PC-3 (cell line): ENCODE measurements at regions of chr5 and their contacts with region 1.

Region 1: DNA sequence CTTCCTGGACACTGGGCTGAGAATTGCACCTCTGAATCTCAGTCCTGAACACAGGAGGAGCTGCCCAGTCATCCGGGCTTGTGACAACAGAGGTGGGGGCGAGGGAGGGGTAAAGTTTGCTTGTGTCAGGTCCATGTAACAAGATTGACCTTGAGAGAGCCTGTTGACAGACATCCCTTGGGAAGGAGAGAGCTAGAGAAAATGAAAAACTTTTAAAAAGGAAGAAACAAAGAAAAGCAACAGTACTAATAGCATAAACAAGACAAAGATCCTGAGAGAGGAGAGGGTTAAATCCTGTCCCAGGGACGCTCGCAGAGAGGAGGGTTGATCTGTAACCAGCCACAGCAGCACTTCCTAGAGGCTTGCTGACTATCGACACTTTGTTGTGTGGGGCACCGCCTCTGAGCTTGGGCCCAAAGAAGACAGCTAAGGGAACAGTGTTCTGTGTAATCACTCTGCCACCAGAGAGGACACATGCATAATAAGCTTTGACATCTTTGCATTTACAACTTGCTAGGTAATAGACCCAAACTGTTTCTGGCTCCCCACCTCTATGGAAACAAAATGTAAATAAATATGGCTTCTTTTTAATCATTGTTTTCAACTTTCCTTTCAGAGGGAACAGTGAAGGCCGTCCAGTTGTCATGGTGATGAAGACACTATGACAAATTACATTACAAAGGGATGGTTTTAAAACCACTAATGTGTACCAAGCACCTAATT is 363.7 kb downstream of the CSNK1G3 start:
- DNase-seq: no peak
- ATAC-seq: no peak
- H3K4me3 ChIP-seq: no peak overlapping the region
- H3K27ac ChIP-seq: no peak overlapping the region
- H3K4me1 ChIP-seq: no peaks in the 10 kb centered on the region
- H3K27me3 ChIP-seq: no peaks in the 10 kb centered on the region
- CTCF ChIP-seq: no peak

Region 2: GRCh38 chr5:123807177-123807945 is 68.4 kb before region 1 on chr5:
- CTCF ChIA-PET with region 1: no interaction called
- POLR2A ChIA-PET with region 1: no interaction called
- intact Hi-C with region 1: no loop called
- DNase-seq: peak; percentile 45
- ATAC-seq: peak; percentile 91
- H3K4me3 ChIP-seq: no peak overlapping the region
- H3K27ac ChIP-seq: no peak overlapping the region
- H3K4me1 ChIP-seq: peaks cover 4% of the 10 kb centered on the region; the same call in 1 of the 2 replicates
- H3K27me3 ChIP-seq: no peaks in the 10 kb centered on the region
- CTCF ChIP-seq: no peak

Region 3: GRCh38 chr5:123845356-123846100 is 30.2 kb before region 1 on chr5:
- CTCF ChIA-PET with region 1: no interaction called
- POLR2A ChIA-PET with region 1: no interaction called
- intact Hi-C with region 1: no loop called
- DNase-seq: no peak
- ATAC-seq: no peak
- H3K4me3 ChIP-seq: no peak overlapping the region
- H3K27ac ChIP-seq: no peak overlapping the region
- H3K4me1 ChIP-seq: no peaks in the 10 kb centered on the region
- H3K27me3 ChIP-seq: no peaks in the 10 kb centered on the region
- CTCF ChIP-seq: no peak

Region 4: DNA sequence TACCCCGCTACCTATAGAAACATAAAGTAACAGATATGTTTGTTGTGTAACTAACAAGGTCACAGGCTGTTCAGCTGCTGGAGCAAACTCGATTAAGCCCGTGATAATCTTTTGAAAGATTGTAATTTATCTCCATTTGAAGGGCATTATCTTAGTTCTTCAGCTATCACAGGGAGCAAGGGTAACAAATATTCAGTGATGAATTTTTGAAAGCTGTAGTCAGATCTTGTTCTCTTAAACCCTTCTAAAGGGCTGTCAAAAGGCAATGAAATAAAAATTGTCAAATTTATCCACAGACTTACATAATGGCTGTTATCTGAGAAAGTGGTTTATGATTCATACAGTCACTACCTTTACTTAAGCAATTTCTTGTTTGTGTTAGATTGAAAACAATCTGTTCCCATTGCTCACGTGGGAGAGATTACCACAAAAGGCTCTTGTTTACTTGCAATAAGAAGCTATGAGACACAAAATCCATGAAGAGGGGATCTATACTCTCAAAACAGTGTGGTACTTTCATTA is 949.0 kb after region 1 on chr5:
- CTCF ChIA-PET with region 1: no interaction called
- POLR2A ChIA-PET with region 1: interaction called, 10 read pairs
- intact Hi-C with region 1: no loop called
- DNase-seq: peak; percentile 60
- ATAC-seq: peak; percentile 78
- H3K4me3 ChIP-seq: no peak overlapping the region
- H3K27ac ChIP-seq: no peak overlapping the region
- H3K4me1 ChIP-seq: peaks cover 9% of the 10 kb centered on the region; the same call in 1 of the 2 replicates
- H3K27me3 ChIP-seq: no peaks in the 10 kb centered on the region
- CTCF ChIP-seq: no peak